GM12878 (cell line): ENCODE measurements at regions of chr15 and their contacts with region 1.

Region 1: GRCh38 chr15:55434989-55435825 is 26.9 kb downstream of the PIERCE2 start:
- DNase-seq: no peak
- ATAC-seq: peak; percentile 94
- H3K4me3 ChIP-seq: no peak overlapping the region
- H3K27ac ChIP-seq: no peak overlapping the region
- H3K4me1 ChIP-seq: no peaks in the 10 kb centered on the region
- H3K27me3 ChIP-seq: no peaks in the 10 kb centered on the region
- CTCF ChIP-seq: peak; percentile 54 to 66 (median 56)
- EP300 ChIP-seq: no peak
- POLR2A ChIP-seq: no peak
- RAD21 ChIP-seq: peak; percentile 78

Region 2: GRCh38 chr15:53808058-53808706 is 1627.0 kb before region 1 on chr15:
- CTCF ChIA-PET with region 1: interaction called, 8 read pairs
- POLR2A ChIA-PET with region 1: no interaction called
- RAD21 ChIA-PET with region 1: interaction called, 3 read pairs
- SMC1A ChIA-PET with region 1: no interaction called
- in situ Hi-C with region 1: loop called (anchors 25 kb)
- intact Hi-C with region 1: no loop called
- DNase-seq: no peak
- ATAC-seq: peak; percentile 73
- H3K4me3 ChIP-seq: no peak overlapping the region
- H3K27ac ChIP-seq: no peak overlapping the region
- H3K4me1 ChIP-seq: no peaks in the 10 kb centered on the region
- H3K27me3 ChIP-seq: no peaks in the 10 kb centered on the region
- CTCF ChIP-seq: peak; percentile 47 to 54 (median 52)
- EP300 ChIP-seq: no peak
- POLR2A ChIP-seq: no peak
- RAD21 ChIP-seq: peak; percentile 19; the same call in 1 of the 2 replicates

Region 3: DNA sequence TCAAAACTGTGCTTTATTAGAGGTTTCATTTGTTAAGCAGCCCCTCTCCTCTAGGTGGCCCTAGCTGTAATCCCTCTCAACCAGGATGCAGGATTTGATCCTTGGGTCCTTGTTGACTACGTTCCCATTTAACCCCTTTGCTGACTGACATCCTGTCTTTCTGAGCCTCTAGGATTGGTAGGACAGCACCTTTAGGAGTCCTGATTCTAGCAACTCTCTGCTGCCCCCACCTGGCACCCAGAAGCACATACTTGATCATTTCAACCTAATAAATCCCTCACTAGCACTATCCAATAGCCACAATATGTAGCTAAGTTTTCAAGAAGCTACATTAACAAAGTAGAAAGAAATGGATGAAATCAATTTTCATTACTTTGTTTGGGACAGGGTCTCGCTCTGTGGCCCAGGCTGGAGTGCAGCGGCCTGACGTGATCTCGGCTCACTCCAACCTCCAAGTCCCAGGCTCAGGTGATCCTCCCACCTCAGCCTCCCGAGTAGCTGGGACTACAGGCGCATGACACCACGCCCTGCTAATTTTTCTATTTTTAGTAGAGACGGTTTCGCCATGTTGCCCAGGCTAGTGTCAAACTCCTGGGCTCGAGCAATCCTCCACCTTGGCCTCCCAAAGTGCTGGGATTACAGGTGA is 266.8 kb before region 1 on chr15:
- CTCF ChIA-PET with region 1: interaction called, 10 read pairs
- POLR2A ChIA-PET with region 1: no interaction called
- RAD21 ChIA-PET with region 1: interaction called, 7 read pairs
- SMC1A ChIA-PET with region 1: interaction called, 4 read pairs
- in situ Hi-C with region 1: no loop called
- intact Hi-C with region 1: no loop called
- DNase-seq: peak; percentile 8
- ATAC-seq: peak; percentile 99
- H3K4me3 ChIP-seq: no peak overlapping the region
- H3K27ac ChIP-seq: no peak overlapping the region
- H3K4me1 ChIP-seq: no peaks in the 10 kb centered on the region
- H3K27me3 ChIP-seq: no peaks in the 10 kb centered on the region
- CTCF ChIP-seq: peak; percentile 79 to 94 (median 86)
- EP300 ChIP-seq: no peak
- POLR2A ChIP-seq: no peak
- RAD21 ChIP-seq: peak; percentile 75

Region 4: GRCh38 chr15:55290528-55291057 is 144.6 kb before region 1 on chr15:
- CTCF ChIA-PET with region 1: interaction called, 44 read pairs
- POLR2A ChIA-PET with region 1: no interaction called
- RAD21 ChIA-PET with region 1: interaction called, 16 read pairs
- SMC1A ChIA-PET with region 1: interaction called, 22 read pairs
- in situ Hi-C with region 1: no loop called
- intact Hi-C with region 1: loop called (anchors 1 kb)
- DNase-seq: no peak
- ATAC-seq: peak; percentile 83
- H3K4me3 ChIP-seq: peak overlapping the region; percentile 89; the same call in 1 of the 2 replicates
- H3K27ac ChIP-seq: no peak overlapping the region; the same call in 1 of the 2 replicates
- H3K4me1 ChIP-seq: no peaks in the 10 kb centered on the region; the same call in 1 of the 2 replicates
- H3K27me3 ChIP-seq: no peaks in the 10 kb centered on the region
- CTCF ChIP-seq: peak; percentile 90 to 97 (median 92)
- EP300 ChIP-seq: no peak; a peak in 1 of 4 replicates
- POLR2A ChIP-seq: no peak
- RAD21 ChIP-seq: peak; percentile 96

Region 5: DNA sequence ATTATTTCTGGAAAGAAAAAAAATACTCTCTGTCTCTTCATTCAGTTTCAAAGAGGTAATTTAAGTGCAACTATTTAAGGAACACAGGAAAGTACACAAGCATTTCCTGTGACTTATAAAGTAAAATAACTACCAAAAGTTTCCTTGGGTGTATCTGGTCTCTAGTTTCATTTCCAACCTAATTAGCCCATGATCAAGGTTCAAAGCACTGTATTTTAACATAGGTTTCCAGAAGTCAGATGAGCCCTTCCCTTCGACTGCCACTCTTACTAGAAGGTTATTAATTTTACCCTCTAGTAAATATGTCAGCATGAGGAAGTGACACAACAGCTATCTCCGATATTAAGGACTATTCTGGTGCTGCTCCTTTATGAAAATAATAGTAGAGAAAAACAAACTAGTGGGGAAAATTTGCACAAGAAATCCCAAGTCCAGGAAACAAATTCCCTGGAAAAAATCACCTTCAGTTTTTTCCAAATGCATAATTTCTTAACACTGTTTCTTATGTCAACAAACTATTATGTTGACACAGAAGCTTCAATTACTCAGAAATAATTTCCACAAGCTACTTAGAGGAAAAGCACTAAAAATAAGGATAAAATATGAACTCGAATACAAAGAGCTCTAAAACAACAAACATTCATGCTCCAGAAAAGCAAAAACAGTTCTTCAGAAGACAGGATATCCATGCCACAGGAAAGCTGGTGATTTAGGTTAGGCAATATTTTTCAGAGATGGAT is 62.3 kb before region 1 on chr15:
- CTCF ChIA-PET with region 1: interaction called, 19 read pairs
- POLR2A ChIA-PET with region 1: interaction called, 5 read pairs
- RAD21 ChIA-PET with region 1: interaction called, 3 read pairs
- SMC1A ChIA-PET with region 1: interaction called, 4 read pairs
- in situ Hi-C with region 1: no loop called
- intact Hi-C with region 1: no loop called
- DNase-seq: peak; percentile 24
- ATAC-seq: peak; percentile 80
- H3K4me3 ChIP-seq: peak overlapping the region; percentile 10; the same call in 1 of the 2 replicates
- H3K27ac ChIP-seq: peak overlapping the region; percentile 50
- H3K4me1 ChIP-seq: peaks cover 7% of the 10 kb centered on the region
- H3K27me3 ChIP-seq: no peaks in the 10 kb centered on the region
- CTCF ChIP-seq: no peak
- EP300 ChIP-seq: no peak
- POLR2A ChIP-seq: no peak
- RAD21 ChIP-seq: no peak

Region 6: DNA sequence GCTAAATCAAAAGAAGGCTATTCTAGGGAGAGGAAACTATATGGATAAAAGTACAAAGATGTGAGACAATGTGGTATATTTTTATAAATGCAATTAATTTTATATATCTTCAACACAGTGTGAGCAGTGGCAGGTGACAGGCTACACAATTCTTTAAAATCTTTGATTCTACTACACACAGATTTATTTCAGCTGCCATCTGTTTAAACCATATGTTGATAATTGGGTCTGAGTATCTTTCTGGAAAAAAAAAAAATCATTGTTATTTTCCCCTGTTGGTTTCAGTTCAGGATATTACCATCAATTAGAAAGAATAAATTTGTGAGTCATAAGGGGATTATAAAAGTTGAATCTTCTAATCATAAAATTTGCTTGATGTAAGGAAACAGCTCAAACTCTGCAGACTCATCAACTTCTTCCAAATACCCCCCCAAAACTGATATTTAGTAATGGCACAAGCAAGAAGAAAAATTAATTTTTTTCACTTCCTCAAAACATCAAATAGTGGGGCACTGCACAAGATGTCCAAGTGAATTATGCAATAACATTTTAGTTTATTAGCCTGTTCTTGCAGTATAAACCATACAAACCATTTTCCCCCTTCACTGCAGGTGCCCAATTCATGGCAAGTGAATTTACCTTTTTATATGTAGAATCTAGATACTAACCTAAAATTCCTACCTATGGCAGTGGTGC is 14.9 kb before region 1 on chr15:
- CTCF ChIA-PET with region 1: interaction called, 14 read pairs
- POLR2A ChIA-PET with region 1: no interaction called
- RAD21 ChIA-PET with region 1: interaction called, 3 read pairs
- SMC1A ChIA-PET with region 1: interaction called, 6 read pairs
- in situ Hi-C with region 1: no loop called
- intact Hi-C with region 1: no loop called
- DNase-seq: no peak
- ATAC-seq: no peak
- H3K4me3 ChIP-seq: no peak overlapping the region
- H3K27ac ChIP-seq: no peak overlapping the region
- H3K4me1 ChIP-seq: no peaks in the 10 kb centered on the region
- H3K27me3 ChIP-seq: no peaks in the 10 kb centered on the region
- CTCF ChIP-seq: no peak
- EP300 ChIP-seq: no peak
- POLR2A ChIP-seq: no peak
- RAD21 ChIP-seq: no peak

Region 7: GRCh38 chr15:55588070-55588814 is 153.0 kb after region 1 on chr15 and contains the start of gene PYGO1:
- CTCF ChIA-PET with region 1: no interaction called
- POLR2A ChIA-PET with region 1: no interaction called
- RAD21 ChIA-PET with region 1: no interaction called
- SMC1A ChIA-PET with region 1: no interaction called
- in situ Hi-C with region 1: no loop called
- intact Hi-C with region 1: no loop called
- DNase-seq: no peak
- ATAC-seq: no peak; the same call in 2 of the 3 replicates
- H3K4me3 ChIP-seq: no peak within 1 kb of the TSS
- H3K27ac ChIP-seq: no peak within 1 kb of the TSS
- H3K4me1 ChIP-seq: no peaks in the 10 kb centered on the region
- H3K27me3 ChIP-seq: peaks cover 1 to 26% of the 10 kb centered on the region in 2 experiments
- CTCF ChIP-seq: no peak
- EP300 ChIP-seq: no peak
- POLR2A ChIP-seq: no peak
- RAD21 ChIP-seq: no peak
- polyA plus RNA-seq, gene PYGO1: not detected

Region 8: GRCh38 chr15:55999636-56000035 is 564.4 kb after region 1 on chr15:
- CTCF ChIA-PET with region 1: no interaction called
- POLR2A ChIA-PET with region 1: no interaction called
- RAD21 ChIA-PET with region 1: no interaction called
- SMC1A ChIA-PET with region 1: no interaction called
- in situ Hi-C with region 1: no loop called
- intact Hi-C with region 1: no loop called
- DNase-seq: no peak
- ATAC-seq: no peak
- H3K4me3 ChIP-seq: no peak overlapping the region
- H3K27ac ChIP-seq: no peak overlapping the region
- H3K4me1 ChIP-seq: no peaks in the 10 kb centered on the region
- H3K27me3 ChIP-seq: peaks cover 0 to 2% of the 10 kb centered on the region in 2 experiments; a peak in 1 of 4 replicates
- CTCF ChIP-seq: no peak
- EP300 ChIP-seq: no peak
- POLR2A ChIP-seq: no peak
- RAD21 ChIP-seq: no peak